Lower leg skin (tissue), 4 donors: ENCODE measurements at regions of chr14 and their contacts with region 1.

Region 1: GRCh38 chr14:36207500-36207899 is 31.0 kb upstream of the PTCSC3 start:
- DNase-seq: no peak
- H3K4me3 ChIP-seq: no peak overlapping the region
- CTCF ChIP-seq: no peak
- POLR2A ChIP-seq: no peak

Region 2: DNA sequence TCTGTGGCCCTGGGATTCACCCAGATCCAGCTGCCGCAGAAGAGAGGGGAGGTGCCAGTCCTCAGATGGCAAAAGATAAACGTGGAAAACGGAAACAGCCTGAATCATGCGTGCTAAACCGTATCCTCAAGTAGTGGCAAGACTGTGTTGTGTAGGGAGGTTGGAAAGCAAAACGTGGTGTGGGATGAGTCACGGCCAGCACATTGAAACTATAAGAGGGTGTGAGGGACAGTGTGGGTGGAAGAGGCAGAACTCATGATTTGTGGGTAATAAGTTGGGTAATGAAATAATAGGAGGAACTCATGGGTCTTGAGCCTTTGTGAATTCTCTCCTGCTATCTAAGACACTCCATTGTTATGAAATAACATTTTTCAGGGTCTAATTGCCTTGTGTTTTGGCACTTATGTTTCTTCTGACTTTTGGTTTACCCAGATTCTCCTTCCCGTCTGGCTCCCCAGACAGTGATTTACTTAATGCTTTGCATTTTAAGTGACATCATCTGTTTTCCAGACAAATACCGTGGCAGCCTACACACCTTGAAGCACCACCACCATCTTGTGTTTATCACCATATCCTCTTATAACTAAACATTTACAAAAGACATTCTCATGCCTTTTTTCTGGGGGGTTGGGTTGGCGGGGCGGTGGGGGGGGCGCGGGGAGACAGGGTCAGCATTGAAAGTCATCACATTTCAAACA is 31.3 kb after region 1 on chr14:
- intact Hi-C with region 1: no loop called
- DNase-seq: peak in 1 of 2 donors; percentile 29
- H3K4me3 ChIP-seq: no peak overlapping the region
- CTCF ChIP-seq: no peak
- POLR2A ChIP-seq: no peak

Region 3: GRCh38 chr14:36361210-36361853 is 153.8 kb after region 1 on chr14:
- intact Hi-C with region 1: loop called (anchors 10 kb)
- DNase-seq: no peak
- H3K4me3 ChIP-seq: no peak overlapping the region
- CTCF ChIP-seq: no peak
- POLR2A ChIP-seq: no peak

Region 4: DNA sequence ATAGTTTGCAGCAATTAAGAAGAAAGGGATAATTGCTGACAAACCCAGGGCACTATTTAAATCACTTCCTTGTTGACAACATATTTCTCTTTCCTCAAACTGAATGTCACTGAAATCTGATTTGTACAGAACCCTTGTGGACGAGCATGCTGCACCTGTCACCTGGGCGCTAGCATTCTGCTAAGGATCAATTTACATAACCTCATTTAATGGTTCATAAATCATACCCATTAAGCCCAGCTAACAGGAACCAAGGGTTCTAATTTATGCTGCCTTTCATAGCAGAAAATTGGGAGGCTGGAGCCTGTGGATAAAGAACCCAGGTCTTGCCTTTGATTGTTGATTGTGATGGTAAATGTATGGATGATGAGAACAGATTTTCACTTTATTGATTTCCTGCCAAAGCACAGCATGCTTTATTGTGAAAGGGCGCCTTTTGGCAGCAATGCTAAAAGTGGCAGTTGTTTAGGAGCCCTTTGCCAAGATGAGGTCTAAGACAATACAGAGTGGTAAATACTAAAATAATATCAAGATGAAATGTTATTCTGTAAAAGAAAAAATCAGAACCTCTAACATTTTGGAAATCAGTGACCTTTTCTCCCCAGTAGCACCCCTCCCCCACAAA is 217.1 kb after region 1 on chr14:
- intact Hi-C with region 1: no loop called
- DNase-seq: no peak
- H3K4me3 ChIP-seq: no peak overlapping the region
- CTCF ChIP-seq: no peak
- POLR2A ChIP-seq: no peak